Vagina (tissue), 2 donors: ENCODE measurements at regions of chr2 and their contacts with region 1.

Region 1: GRCh38 chr2:27102329-27102728 is 15.8 kb downstream of the KHK start:
- DNase-seq: no peak
- H3K4me3 ChIP-seq: no peak overlapping the region
- H3K27ac ChIP-seq: no peak overlapping the region
- H3K4me1 ChIP-seq: no peaks in the 10 kb centered on the region
- H3K27me3 ChIP-seq: no peaks in the 10 kb centered on the region
- CTCF ChIP-seq: no peak
- POLR2A ChIP-seq: no peak

Region 2: DNA sequence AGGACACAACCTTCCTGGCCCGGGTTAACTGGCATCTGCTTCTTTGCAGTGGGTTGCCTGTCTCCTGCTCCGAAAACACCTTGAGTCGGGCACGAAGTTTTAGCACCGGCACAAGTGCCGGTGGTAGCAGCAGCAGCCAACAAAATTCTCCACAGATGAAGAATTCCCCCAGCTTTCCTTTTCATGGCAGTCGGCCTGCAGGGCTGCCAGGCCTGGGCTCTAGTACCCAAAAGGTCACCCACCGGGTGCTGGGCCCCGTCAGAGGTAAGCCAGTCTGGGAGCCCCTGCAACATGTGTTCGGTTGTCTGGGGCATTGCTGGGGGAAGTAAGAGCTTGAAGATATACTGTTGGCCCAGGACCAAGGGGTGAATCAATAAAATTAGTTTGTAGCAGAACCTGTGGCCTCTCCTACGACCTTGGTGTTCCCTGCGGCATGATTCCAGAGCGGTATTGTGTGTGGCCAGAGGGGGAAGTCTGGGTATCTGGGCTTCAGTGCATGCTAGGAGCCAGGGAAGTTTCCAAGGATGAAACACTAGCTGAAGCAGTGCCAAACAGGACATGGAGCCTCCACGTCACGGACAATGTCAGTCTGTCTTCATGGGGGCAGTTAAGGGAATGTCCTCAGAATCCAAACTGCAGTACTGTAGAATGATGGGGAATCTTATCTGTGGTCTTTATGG is 43.0 kb before region 1 on chr2:
- intact Hi-C with region 1: no loop called
- DNase-seq: peak in 1 of 2 donors; percentile 74
- H3K4me3 ChIP-seq: no peak overlapping the region
- H3K27ac ChIP-seq: no peak overlapping the region
- H3K4me1 ChIP-seq: no peaks in the 10 kb centered on the region
- H3K27me3 ChIP-seq: no peaks in the 10 kb centered on the region
- CTCF ChIP-seq: no peak
- POLR2A ChIP-seq: no peak

Region 3: DNA sequence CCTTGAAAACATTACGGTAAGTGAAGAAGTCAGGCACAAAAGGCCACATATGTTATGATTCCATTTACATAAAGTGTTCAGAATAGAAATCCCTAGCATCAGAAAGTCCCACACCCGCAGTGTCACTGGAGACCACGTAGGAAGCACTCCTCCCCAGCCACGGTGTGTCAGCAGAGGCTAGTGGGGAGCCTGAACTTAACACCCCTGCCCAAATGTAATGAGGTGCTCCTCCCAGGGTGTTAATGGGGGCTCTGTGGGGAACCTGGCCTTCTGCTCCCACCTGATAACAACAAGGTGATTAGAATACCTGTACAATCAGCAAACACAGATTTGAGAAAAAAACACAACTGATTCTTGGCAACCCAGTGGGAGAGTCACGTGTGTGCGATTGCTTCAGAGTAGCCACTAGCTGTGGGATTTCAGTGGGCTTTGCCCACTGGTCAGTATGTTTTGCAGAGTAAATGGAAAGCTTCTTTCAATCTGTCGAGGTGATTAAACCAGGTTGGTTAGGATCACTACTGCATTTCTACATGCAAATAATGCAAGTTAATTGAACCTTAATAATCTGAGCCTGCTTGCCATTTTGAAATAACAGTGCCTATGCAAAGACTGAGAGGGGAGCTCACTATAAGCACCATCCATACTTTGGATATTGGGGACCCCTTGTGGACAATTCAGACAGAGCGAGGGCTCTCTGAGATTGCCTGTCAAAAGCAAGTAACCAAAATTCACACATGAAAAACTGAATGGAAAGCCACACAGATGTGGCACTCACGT is 88.9 kb after region 1 on chr2:
- intact Hi-C with region 1: loop called (anchors 5 kb)
- DNase-seq: no peak
- H3K4me3 ChIP-seq: no peak overlapping the region
- H3K27ac ChIP-seq: no peak overlapping the region
- H3K4me1 ChIP-seq: peaks cover 4% of the 10 kb centered on the region
- H3K27me3 ChIP-seq: no peaks in the 10 kb centered on the region
- CTCF ChIP-seq: peak; percentile 34 to 70 (median 38)
- POLR2A ChIP-seq: no peak